ENCODE measurements at regions of chr6 and their contacts with region 1.

Region 1: GRCh38 chr6:11653028-11653583 is 115.6 kb downstream of the TMEM170B start:
- DNase-seq: no peak
- ATAC-seq: peak in 1 of 2 donors; percentile 29
- H3K4me3 ChIP-seq: no peak overlapping the region
- H3K27ac ChIP-seq: peak overlapping the region in 2 of 4 donors; percentile 43 to 46
- H3K4me1 ChIP-seq: peaks cover 0 to 22% of the 10 kb centered on the region in 2 donors
- H3K27me3 ChIP-seq: no peaks in the 10 kb centered on the region
- CTCF ChIP-seq: no peak
- POLR2A ChIP-seq: no peak

Region 2: DNA sequence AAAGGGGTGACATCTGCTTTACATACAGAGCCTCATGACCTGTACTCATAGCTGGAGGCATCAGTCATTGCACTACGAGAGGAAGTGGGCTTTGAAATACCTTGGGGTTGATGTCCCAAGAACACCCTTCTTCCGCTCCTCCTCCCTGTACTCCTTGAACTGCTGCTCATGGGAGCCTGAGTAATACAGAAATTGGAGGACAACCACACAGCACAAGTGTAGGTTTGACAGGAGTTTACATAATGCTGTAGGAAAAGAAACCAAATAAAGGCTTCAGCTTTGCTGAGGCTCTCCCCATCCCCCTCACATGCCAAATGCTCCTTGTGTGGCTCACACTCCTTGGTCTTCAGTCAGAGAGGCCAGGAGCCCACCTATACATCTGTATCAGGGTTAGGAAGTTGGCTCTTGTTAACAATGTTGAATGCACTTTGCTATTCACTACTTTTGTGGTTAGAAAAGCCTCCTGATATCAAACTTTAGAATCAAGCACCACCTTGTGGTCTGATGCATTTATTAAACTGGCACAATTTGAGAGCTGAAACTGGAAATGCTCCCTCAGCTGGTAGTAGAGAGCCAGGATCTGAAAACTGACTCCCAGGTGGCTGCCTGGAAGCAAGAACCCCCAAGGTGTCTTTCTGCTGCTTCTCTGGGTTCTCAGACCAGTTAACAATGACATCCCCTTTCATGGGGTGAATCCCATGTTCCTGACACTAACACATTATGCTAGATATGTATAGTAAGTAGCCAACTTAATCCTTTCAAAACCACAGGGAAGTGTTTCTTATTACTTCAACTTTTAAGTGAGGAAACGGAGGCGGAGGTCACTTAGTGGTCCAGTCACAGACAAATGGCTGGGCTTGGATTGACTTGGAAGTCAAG is 580.8 kb after region 1 on chr6:
- in situ Hi-C with region 1: loop called in 3 of 4 experiments (anchors 5 to 10 kb)
- intact Hi-C with region 1: loop called (anchors 2 kb)
- DNase-seq: peak in 1 of 2 donors; percentile 2
- ATAC-seq: peak; percentile 56 to 73
- H3K4me3 ChIP-seq: no peak overlapping the region
- H3K27ac ChIP-seq: no peak overlapping the region
- H3K4me1 ChIP-seq: no peaks in the 10 kb centered on the region
- H3K27me3 ChIP-seq: no peaks in the 10 kb centered on the region
- CTCF ChIP-seq: peak; percentile 40 to 64 (median 52)
- POLR2A ChIP-seq: no peak

Region 3: GRCh38 chr6:12595161-12595811 is 942.2 kb after region 1 on chr6:
- in situ Hi-C with region 1: loop called (anchors 10 to 25 kb)
- intact Hi-C with region 1: no loop called
- DNase-seq: peak in 1 of 2 donors; percentile 9
- ATAC-seq: peak in 1 of 2 donors; percentile 54
- H3K4me3 ChIP-seq: no peak overlapping the region
- H3K27ac ChIP-seq: no peak overlapping the region
- H3K4me1 ChIP-seq: no peaks in the 10 kb centered on the region
- H3K27me3 ChIP-seq: no peaks in the 10 kb centered on the region
- CTCF ChIP-seq: no peak
- POLR2A ChIP-seq: no peak

Region 4: GRCh38 chr6:12890171-12890790 is 1237.2 kb after region 1 on chr6:
- in situ Hi-C with region 1: loop called in 1 of 4 experiments (anchors 25 kb)
- intact Hi-C with region 1: loop called (anchors 5 kb)
- DNase-seq: no peak
- ATAC-seq: no peak
- H3K4me3 ChIP-seq: no peak overlapping the region
- H3K27ac ChIP-seq: no peak overlapping the region
- H3K4me1 ChIP-seq: peaks cover 0 to 5% of the 10 kb centered on the region in 2 donors
- H3K27me3 ChIP-seq: no peaks in the 10 kb centered on the region
- CTCF ChIP-seq: peak in 2 of 5 experiments; percentile 18 to 34
- POLR2A ChIP-seq: no peak

Measured in gastrocnemius medialis (tissue), 4 donors.